MCF 10A (cell line): ENCODE measurements at regions of chr17 and their contacts with region 1.

Region 1: DNA sequence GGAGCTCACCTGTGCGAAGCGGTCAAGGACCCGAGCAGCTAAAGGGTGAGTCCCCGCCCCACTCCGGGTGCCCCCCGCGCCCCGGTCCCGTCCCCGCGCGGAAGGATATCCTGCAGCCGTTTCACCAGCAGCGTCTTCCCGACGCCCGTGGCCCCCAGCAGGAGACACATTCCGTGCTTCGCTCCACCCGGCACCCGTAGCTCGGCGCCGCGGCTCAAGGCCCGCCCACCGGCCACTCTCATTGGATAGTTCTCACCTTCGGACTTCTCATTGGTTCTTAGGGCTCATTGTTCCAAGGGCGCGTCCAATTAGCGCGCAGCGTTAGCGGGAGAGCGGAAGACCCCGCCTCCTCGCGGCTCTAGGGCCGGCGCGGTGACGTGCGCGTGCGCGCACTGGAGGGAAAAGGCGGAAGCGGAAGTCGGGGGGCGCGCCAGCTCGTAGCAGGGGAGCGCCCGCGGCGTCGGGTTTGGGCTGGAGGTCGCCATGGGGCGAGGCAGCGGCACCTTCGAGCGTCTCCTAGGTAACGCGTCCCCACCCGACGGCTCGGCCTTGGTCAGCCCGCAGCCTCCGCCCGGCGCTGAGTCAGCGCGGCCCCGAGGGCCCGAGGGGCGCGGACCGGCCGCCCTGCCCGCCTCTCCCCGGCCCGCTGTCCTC is at the starts of genes ARL16 and HGS:
- DNase-seq: peak; percentile 99
- H3K4me3 Mint-ChIP-seq: peak within 1 kb of the TSS; percentile 91
- H3K27ac Mint-ChIP-seq: peak within 1 kb of the TSS; percentile 89
- H3K4me1 Mint-ChIP-seq: peaks cover 5% of the 10 kb centered on the region
- H3K27me3 Mint-ChIP-seq: no peaks in the 10 kb centered on the region
- CTCF ChIP-seq: no peak
- total RNA-seq, gene ARL16: 34.8 and 38.6 TPM in 2 replicates
- total RNA-seq, gene HGS: 160 and 178 TPM in 2 replicates

Region 2: GRCh38 chr17:81636505-81637288 is 47.0 kb before region 1 on chr17 and contains the starts of genes NPLOC4 and TSPAN10:
- CTCF ChIA-PET with region 1: no interaction called
- POLR2A ChIA-PET with region 1: interaction called, 65 read pairs
- intact Hi-C with region 1: loop called (anchors 1 kb)
- DNase-seq: peak; percentile 86
- H3K4me3 Mint-ChIP-seq: peak within 1 kb of the TSS; percentile 89
- H3K27ac Mint-ChIP-seq: peak within 1 kb of the TSS; percentile 96
- H3K4me1 Mint-ChIP-seq: peaks cover 9% of the 10 kb centered on the region
- H3K27me3 Mint-ChIP-seq: no peaks in the 10 kb centered on the region
- CTCF ChIP-seq: no peak
- total RNA-seq, gene NPLOC4: 83.9 and 95.1 TPM in 2 replicates
- total RNA-seq, gene TSPAN10: 1.8 and 2.1 TPM in 2 replicates

Region 3: DNA sequence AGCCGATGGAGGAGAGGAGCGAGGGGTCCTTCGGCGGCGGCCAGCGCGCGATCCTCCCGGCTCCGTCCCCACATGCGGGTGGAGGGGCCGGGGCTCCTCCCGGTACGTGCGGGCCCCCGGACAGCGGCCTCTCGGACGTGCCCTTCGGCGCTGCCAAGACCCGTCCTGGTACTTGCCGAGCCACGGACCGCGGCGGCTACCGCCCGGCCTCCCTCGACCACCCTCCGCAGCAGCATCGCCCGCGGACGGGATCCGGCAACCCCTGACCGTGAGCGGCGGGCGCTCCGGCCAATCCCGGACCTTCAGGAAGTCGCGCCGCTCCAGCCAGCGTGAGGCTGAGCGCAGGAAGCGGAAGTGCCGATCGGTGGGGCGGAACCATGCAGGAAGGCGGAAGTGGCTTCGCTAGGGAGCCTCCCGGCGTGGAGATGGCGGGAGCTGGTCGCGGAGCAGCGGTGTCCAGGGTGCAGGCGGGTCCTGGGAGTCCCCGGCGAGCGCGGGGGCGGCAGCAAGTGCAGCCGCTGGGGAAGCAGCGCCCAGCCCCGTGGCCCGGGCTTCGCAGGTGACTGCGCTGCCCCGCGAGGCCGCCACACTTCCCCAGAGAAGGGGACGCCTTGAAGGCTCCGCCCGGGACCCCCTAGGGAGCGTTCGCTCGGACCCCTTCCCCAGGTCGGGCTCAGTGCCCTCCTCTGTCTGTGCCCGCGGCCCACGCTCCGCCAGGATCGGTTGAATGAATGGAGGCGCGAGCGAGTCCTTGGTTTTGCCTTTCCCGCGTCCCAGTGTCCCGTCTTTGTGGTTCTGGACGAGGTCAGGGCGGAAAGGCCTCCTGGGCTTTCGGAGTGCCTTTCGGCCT is 17.1 kb before region 1 on chr17 and contains the starts of genes CCDC137 and OXLD1:
- CTCF ChIA-PET with region 1: interaction called, 5 read pairs
- POLR2A ChIA-PET with region 1: interaction called, 101 read pairs
- intact Hi-C with region 1: loop called (anchors 2 kb)
- DNase-seq: peak; percentile 92
- H3K4me3 Mint-ChIP-seq: peak within 1 kb of the TSS; percentile 85
- H3K27ac Mint-ChIP-seq: peak within 1 kb of the TSS; percentile 79
- H3K4me1 Mint-ChIP-seq: peaks cover 15% of the 10 kb centered on the region
- H3K27me3 Mint-ChIP-seq: no peaks in the 10 kb centered on the region
- CTCF ChIP-seq: no peak
- total RNA-seq, gene CCDC137: 23.9 and 27.1 TPM in 2 replicates
- total RNA-seq, gene OXLD1: 47.6 and 54.8 TPM in 2 replicates

Region 4: GRCh38 chr17:81696218-81696941 is 12.7 kb after region 1 on chr17:
- CTCF ChIA-PET with region 1: no interaction called
- POLR2A ChIA-PET with region 1: interaction called, 122 read pairs
- intact Hi-C with region 1: no loop called
- DNase-seq: no peak
- H3K4me3 Mint-ChIP-seq: no peak overlapping the region
- H3K27ac Mint-ChIP-seq: no peak overlapping the region
- H3K4me1 Mint-ChIP-seq: peaks cover 6% of the 10 kb centered on the region
- H3K27me3 Mint-ChIP-seq: no peaks in the 10 kb centered on the region
- CTCF ChIP-seq: no peak

Region 5: DNA sequence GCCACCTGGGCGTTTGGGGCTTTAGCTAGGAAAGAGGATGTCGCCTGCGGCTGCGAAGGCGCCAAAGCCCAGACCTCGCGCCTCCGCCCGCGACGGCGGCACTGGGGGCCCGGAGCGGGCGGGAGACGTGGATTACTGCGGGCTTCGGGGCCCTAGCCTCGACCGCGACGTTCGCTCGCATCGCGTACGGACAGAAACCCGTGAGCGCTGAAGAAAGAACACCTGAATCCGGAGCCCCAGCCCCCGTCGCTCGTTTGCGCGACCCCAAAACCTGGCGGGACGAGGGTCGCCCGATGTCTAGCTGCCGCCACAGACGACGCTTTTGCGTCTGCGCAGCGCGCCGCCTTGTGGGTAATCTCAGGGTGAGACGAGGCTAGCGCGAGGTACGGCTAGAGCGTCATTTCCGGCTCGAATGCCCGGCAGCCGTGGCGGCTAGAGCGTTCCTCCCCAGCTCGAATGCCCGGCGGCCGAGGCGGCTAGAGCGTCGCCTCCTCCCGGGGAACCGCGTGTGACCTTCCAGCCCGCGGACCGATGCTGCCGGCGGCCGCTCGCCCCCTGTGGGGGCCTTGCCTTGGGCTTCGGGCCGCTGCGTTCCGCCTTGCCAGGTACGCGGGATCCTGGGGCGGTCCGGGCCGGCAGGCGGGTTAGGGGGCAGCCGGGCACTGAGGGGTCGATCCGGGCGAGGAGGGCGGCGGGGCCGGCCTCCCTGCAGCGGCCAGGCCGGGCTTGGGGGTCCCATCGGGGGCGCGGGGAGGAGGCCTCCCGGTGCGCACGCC is 19.4 kb after region 1 on chr17 and contains the start of gene MRPL12:
- CTCF ChIA-PET with region 1: interaction called, 4 read pairs
- POLR2A ChIA-PET with region 1: interaction called, 122 read pairs
- intact Hi-C with region 1: no loop called
- DNase-seq: peak; percentile 90
- H3K4me3 Mint-ChIP-seq: peak within 1 kb of the TSS; percentile 98
- H3K27ac Mint-ChIP-seq: peak within 1 kb of the TSS; percentile 97
- H3K4me1 Mint-ChIP-seq: peaks cover 12% of the 10 kb centered on the region
- H3K27me3 Mint-ChIP-seq: no peaks in the 10 kb centered on the region
- CTCF ChIP-seq: no peak
- total RNA-seq, gene MRPL12: 82.6 and 143 TPM in 2 replicates

Region 6: DNA sequence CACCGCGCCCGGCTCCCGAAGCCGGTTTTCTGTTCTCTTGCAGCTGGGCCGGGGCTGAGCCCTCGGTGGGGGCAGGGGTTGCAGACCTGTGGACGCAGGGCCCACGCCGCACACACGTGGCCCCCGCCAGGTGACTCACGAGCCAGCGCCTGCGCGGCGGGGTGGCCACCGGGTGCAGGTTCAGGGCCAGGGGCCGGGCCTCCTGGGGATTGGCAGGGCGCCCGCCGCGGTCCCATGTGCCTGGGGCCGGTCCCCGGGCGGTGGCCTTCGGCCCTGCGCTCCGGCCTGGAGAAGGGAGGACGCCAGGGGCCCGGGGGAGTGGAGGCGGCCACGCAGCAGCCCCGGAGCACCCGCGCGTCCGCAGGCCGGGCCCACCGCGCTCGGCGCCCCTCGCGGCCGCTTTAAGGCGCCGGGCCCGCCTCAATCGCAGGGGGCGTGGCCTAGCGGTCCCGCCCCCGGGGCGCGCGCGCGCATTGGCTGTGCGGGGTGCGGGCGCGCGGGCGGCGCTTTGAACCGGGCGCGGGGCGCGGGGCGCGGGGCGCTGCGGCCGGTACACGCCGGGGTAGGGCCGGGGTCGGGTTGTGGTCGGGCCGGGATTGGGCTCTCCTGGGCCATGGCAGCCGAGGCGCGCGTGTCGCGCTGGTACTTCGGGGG is 28.2 kb after region 1 on chr17 and contains the start of gene SLC25A10:
- CTCF ChIA-PET with region 1: interaction called, 4 read pairs
- POLR2A ChIA-PET with region 1: interaction called, 57 read pairs
- intact Hi-C with region 1: no loop called
- DNase-seq: peak; percentile 85
- H3K4me3 Mint-ChIP-seq: peak within 1 kb of the TSS; percentile 84
- H3K27ac Mint-ChIP-seq: peak within 1 kb of the TSS; percentile 33
- H3K4me1 Mint-ChIP-seq: peaks cover 6% of the 10 kb centered on the region
- H3K27me3 Mint-ChIP-seq: no peaks in the 10 kb centered on the region
- CTCF ChIP-seq: no peak
- total RNA-seq, gene SLC25A10: 5.1 and 9.5 TPM in 2 replicates

Region 7: GRCh38 chr17:81860756-81861518 is 177.2 kb after region 1 on chr17:
- CTCF ChIA-PET with region 1: no interaction called
- POLR2A ChIA-PET with region 1: interaction called, 11 read pairs
- intact Hi-C with region 1: no loop called
- DNase-seq: peak; percentile 100
- H3K4me3 Mint-ChIP-seq: peak overlapping the region; percentile 89
- H3K27ac Mint-ChIP-seq: peak overlapping the region; percentile 98
- H3K4me1 Mint-ChIP-seq: peaks cover 33% of the 10 kb centered on the region
- H3K27me3 Mint-ChIP-seq: no peaks in the 10 kb centered on the region
- CTCF ChIP-seq: no peak